ENCODE measurements at regions of chr6 and their contacts with region 1.

Region 1: GRCh38 chr6:71383901-71384489 is 95.4 kb downstream of the OGFRL1 start:
- DNase-seq: peak; percentile 54
- ATAC-seq: no peak
- H3K4me3 ChIP-seq: no peak overlapping the region
- H3K4me3 Mint-ChIP-seq: no peak overlapping the region
- H3K27ac ChIP-seq: no peak overlapping the region
- H3K27ac Mint-ChIP-seq: no peak overlapping the region
- H3K4me1 ChIP-seq: no peaks in the 10 kb centered on the region
- H3K4me1 Mint-ChIP-seq: peaks cover 5% of the 10 kb centered on the region
- H3K27me3 ChIP-seq: no peaks in the 10 kb centered on the region
- H3K27me3 Mint-ChIP-seq: no peaks in the 10 kb centered on the region
- CTCF ChIP-seq: peak; percentile 90

Region 2: DNA sequence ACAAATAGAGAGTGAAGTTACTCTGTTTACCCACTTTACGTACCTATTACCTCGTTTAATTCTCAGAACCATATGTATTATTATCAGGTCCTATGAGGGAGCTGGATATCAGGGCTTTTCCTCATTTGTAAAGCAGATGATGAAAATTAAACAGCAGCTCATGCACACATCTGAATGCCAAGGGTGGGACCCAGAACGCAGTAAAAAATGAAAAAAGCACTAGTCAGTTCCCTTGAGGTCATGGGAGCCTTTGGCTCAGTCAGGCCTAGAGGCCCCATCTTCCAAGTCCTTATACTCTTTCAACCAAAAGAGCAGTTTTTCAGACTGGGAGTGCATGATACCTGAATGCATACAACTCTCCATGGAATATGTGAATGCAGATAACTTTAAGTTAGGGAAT is 450.1 kb before region 1 on chr6:
- CTCF ChIA-PET with region 1: no interaction called
- POLR2A ChIA-PET with region 1: no interaction called
- intact Hi-C with region 1: no loop called
- DNase-seq: no peak
- ATAC-seq: no peak
- H3K4me3 ChIP-seq: no peak overlapping the region
- H3K4me3 Mint-ChIP-seq: no peak overlapping the region
- H3K27ac ChIP-seq: no peak overlapping the region
- H3K27ac Mint-ChIP-seq: no peak overlapping the region
- H3K4me1 ChIP-seq: no peaks in the 10 kb centered on the region
- H3K4me1 Mint-ChIP-seq: no peaks in the 10 kb centered on the region
- H3K27me3 ChIP-seq: no peaks in the 10 kb centered on the region
- H3K27me3 Mint-ChIP-seq: peaks cover 14% of the 10 kb centered on the region
- CTCF ChIP-seq: no peak

Region 3: GRCh38 chr6:71334768-71335167 is 49.2 kb before region 1 on chr6:
- CTCF ChIA-PET with region 1: no interaction called
- POLR2A ChIA-PET with region 1: no interaction called
- intact Hi-C with region 1: no loop called
- DNase-seq: no peak
- ATAC-seq: no peak
- H3K4me3 ChIP-seq: no peak overlapping the region
- H3K4me3 Mint-ChIP-seq: no peak overlapping the region
- H3K27ac ChIP-seq: no peak overlapping the region
- H3K27ac Mint-ChIP-seq: no peak overlapping the region
- H3K4me1 ChIP-seq: no peaks in the 10 kb centered on the region
- H3K4me1 Mint-ChIP-seq: peaks cover 2% of the 10 kb centered on the region
- H3K27me3 ChIP-seq: peaks cover 0 to 3% (median 0%) of the 10 kb centered on the region in 4 experiments
- H3K27me3 Mint-ChIP-seq: no peaks in the 10 kb centered on the region
- CTCF ChIP-seq: no peak

Region 4: DNA sequence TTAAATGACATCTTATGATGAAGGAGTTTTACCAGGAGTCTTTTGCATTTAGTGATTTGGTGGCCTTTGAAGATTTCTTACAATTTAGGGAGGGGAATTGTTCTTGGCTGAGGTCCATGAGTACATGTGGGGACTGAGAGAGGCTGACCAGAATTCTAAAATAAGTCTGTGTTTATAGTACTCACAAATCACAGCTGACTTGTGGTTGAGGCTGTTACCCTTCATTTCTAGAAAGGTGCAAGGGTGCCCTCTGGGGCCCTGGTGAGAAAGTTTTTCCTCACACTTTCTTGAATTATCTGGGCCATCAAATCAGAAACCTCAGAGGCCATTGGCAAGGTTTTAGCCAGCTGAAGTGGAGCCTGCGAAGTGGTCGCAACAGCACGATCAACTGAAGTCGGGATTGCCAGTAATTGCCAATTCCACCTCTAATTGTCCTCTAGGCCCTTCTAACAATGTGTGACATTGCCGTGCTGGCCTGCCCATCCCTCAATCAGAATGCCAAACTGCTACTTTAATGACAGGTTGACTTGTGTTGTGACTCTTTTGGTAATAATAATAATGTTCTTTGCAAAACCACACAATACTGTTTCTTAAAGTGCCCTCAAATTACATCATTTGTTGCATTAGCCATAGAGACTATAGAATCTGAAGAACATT is 126.2 kb after region 1 on chr6:
- CTCF ChIA-PET with region 1: interaction called, 68 read pairs
- POLR2A ChIA-PET with region 1: no interaction called
- intact Hi-C with region 1: no loop called
- DNase-seq: peak; percentile 62
- ATAC-seq: no peak
- H3K4me3 ChIP-seq: no peak overlapping the region
- H3K4me3 Mint-ChIP-seq: no peak overlapping the region
- H3K27ac ChIP-seq: no peak overlapping the region
- H3K27ac Mint-ChIP-seq: no peak overlapping the region
- H3K4me1 ChIP-seq: no peaks in the 10 kb centered on the region
- H3K4me1 Mint-ChIP-seq: peaks cover 4% of the 10 kb centered on the region
- H3K27me3 ChIP-seq: no peaks in the 10 kb centered on the region
- H3K27me3 Mint-ChIP-seq: peaks cover 6% of the 10 kb centered on the region
- CTCF ChIP-seq: peak; percentile 58